Ovary (tissue), 10 donors: ENCODE measurements at regions of chr3 and their contacts with region 1.

Region 1: DNA sequence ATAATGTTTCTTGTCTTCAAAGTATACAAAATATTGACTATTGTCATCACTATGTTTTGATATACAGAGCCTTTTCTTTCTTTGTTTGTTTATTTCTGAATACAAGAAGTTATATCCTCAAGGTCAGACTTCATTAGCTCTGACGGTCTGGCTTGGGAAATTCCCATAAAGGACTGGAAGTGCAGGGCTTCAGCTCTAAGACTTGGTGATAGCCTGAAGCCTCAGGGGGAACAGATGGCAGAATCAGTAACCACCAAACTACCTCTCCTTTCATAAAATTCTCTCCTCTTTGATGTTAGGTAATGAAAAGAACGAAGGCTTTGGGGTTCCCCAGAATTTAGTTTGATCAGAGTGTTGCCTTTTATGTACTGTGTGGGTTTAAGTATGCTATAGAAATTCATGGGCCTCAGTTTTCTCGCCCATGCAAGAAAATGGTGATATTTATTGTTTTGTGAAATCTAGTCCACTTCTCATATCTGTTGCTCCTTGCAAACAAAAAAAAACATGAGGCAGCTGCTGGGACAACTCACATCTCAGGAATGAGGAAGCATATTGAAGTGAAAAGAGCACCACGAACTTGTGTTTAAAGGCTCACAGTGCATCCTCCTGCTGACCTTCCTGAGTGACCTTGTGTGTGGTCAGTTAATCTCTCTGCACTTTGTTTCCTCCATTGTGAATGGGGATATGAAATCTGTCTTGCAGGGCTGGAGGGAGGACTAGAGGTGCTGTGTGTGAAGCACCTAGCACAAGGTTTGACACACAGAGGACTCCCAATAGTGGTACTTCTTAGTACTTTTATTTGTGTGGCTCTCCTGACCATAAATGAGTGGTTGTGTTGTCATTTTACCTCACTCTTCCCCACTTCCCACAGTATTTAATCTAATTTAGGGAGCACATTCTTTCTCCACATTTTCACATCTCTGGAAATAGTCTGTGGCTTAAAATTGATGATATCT is 569.8 kb upstream of the IL12A start:
- DNase-seq: no peak
- H3K4me3 ChIP-seq: no peak overlapping the region
- H3K27ac ChIP-seq: no peak overlapping the region
- H3K4me1 ChIP-seq: no peaks in the 10 kb centered on the region
- H3K27me3 ChIP-seq: no peaks in the 10 kb centered on the region
- CTCF ChIP-seq: no peak
- EP300 ChIP-seq: no peak
- POLR2A ChIP-seq: no peak

Region 2: DNA sequence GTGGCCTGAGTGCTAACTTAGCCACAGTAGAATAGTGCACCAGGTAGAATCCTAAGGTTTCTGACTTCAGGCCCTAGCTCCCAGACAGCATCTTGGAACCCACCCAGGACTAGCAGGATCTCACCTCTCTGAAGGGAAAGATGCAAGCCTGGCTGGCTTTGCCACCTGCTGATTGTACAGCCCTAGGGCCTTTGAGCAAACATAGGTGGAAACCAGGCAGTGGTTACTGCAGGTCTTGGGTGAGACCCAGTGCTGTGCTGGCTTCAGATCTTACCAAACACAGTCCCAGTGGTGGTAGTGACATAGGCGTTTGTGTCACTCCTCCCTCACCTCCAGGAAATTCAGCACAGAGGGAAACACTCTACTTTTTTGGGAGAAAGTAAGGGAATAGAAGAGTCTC is 14.3 kb before region 1 on chr3:
- intact Hi-C with region 1: loop called in 1 of 4 experiments (anchors 2 kb)
- DNase-seq: no peak
- H3K4me3 ChIP-seq: no peak overlapping the region
- H3K27ac ChIP-seq: no peak overlapping the region
- H3K4me1 ChIP-seq: no peaks in the 10 kb centered on the region
- H3K27me3 ChIP-seq: no peaks in the 10 kb centered on the region
- CTCF ChIP-seq: no peak
- EP300 ChIP-seq: no peak
- POLR2A ChIP-seq: no peak